ENCODE measurements at regions of chr2 and their contacts with region 1.

Region 1: GRCh38 chr2:136185981-136186776 is 68.2 kb upstream of the CXCR4 start:
- DNase-seq: no peak
- H3K4me3 ChIP-seq: no peak overlapping the region
- H3K27ac ChIP-seq: no peak overlapping the region
- H3K4me1 ChIP-seq: no peaks in the 10 kb centered on the region
- H3K27me3 ChIP-seq: no peaks in the 10 kb centered on the region
- CTCF ChIP-seq: no peak
- POLR2A ChIP-seq: no peak

Region 2: GRCh38 chr2:136167721-136168475 is 18.3 kb before region 1 on chr2:
- intact Hi-C with region 1: loop called (anchors 1 kb)
- DNase-seq: no peak
- H3K4me3 ChIP-seq: no peak overlapping the region
- H3K27ac ChIP-seq: no peak overlapping the region
- H3K4me1 ChIP-seq: no peaks in the 10 kb centered on the region
- H3K27me3 ChIP-seq: no peaks in the 10 kb centered on the region
- CTCF ChIP-seq: no peak
- POLR2A ChIP-seq: no peak

Measured in breast epithelium (tissue), 4 donors.